Cardiac septum (tissue), 1 donor: ENCODE measurements at regions of chr17 and their contacts with region 1.

Region 1: GRCh38 chr17:29732613-29733012 is 109.9 kb upstream of the CORO6 start:
- DNase-seq: no peak

Region 2: DNA sequence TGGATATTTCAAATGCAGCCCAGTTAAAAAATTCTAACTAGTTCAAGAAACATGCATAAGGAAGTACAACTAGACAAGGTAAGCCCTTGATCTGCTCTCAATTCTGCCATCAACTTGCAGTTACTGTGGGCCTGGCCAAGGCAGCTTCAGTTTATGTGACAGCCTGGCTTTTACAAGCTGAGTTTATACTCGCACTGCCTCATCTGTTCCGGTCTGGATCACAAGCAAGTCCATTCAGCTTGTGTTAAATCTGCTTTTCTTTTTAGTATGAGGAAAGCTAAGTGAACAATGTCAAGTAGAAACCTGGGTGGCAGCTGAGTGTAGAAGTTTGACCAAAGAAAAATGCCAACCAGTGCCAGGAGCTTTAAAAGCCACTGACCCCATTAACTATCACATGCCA is 33.3 kb before region 1 on chr17:
- intact Hi-C with region 1: loop called (anchors 5 kb)
- DNase-seq: no peak